ENCODE measurements at regions of chr4 and their contacts with region 1.

Region 1: GRCh38 chr4:75724066-75724866 is at the start of gene USO1:
- DNase-seq: peak; percentile 100
- H3K4me3 ChIP-seq: peak within 1 kb of the TSS; percentile 81 to 94 (median 86)
- H3K27ac ChIP-seq: peak within 1 kb of the TSS; percentile 89
- H3K4me1 ChIP-seq: peaks cover 28% of the 10 kb centered on the region
- H3K27me3 ChIP-seq: no peaks in the 10 kb centered on the region
- CTCF ChIP-seq: peak; percentile 73 to 82
- POLR2A ChIP-seq: peak; percentile 97
- total RNA-seq, gene USO1: 60.2 and 66.0 TPM in 2 replicates

Region 2: DNA sequence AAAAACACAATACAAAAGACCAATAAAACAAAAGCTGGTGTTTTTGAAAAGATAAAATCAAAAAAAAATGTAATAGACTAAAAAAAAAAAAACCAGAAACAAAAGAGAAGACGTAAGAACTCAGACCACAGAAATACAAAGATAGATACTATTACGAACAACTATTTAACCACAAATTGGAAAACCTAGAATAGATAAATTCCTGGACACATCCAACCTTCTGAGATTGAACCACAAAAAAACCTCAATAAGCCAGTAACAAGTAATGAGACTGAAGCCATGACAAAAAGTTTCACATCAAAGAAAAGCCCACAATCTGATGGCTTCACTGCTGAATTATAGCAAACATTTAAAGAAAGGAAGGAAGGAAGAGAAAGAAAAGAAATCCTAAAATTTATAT is 226.2 kb before region 1 on chr4:
- CTCF ChIA-PET with region 1: no interaction called
- POLR2A ChIA-PET with region 1: no interaction called
- dilution Hi-C with region 1: no loop called
- intact Hi-C with region 1: no loop called
- DNase-seq: no peak
- H3K4me3 ChIP-seq: no peak overlapping the region
- H3K27ac ChIP-seq: no peak overlapping the region
- H3K4me1 ChIP-seq: no peaks in the 10 kb centered on the region
- H3K27me3 ChIP-seq: no peaks in the 10 kb centered on the region
- CTCF ChIP-seq: no peak
- POLR2A ChIP-seq: no peak

Region 3: GRCh38 chr4:75514131-75514948 is 209.9 kb before region 1 on chr4 and contains the starts of genes RCHY1 and THAP6:
- CTCF ChIA-PET with region 1: interaction called, 3 read pairs
- POLR2A ChIA-PET with region 1: no interaction called
- dilution Hi-C with region 1: no loop called
- intact Hi-C with region 1: loop called (anchors 2 kb)
- DNase-seq: peak; percentile 92
- H3K4me3 ChIP-seq: peak within 1 kb of the TSS; percentile 71 to 94 (median 81)
- H3K27ac ChIP-seq: peak within 1 kb of the TSS; percentile 72
- H3K4me1 ChIP-seq: peaks cover 35% of the 10 kb centered on the region
- H3K27me3 ChIP-seq: no peaks in the 10 kb centered on the region
- CTCF ChIP-seq: no peak
- POLR2A ChIP-seq: peak; percentile 93
- total RNA-seq, gene RCHY1: 29.1 and 30.9 TPM in 2 replicates
- total RNA-seq, gene THAP6: 6.8 and 8.0 TPM in 2 replicates

Region 4: GRCh38 chr4:75653845-75654503 is 70.3 kb before region 1 on chr4:
- CTCF ChIA-PET with region 1: interaction called, 30 read pairs
- POLR2A ChIA-PET with region 1: no interaction called
- dilution Hi-C with region 1: no loop called
- intact Hi-C with region 1: loop called (anchors 1 kb)
- DNase-seq: peak; percentile 61
- H3K4me3 ChIP-seq: no peak overlapping the region
- H3K27ac ChIP-seq: no peak overlapping the region
- H3K4me1 ChIP-seq: peaks cover 4% of the 10 kb centered on the region
- H3K27me3 ChIP-seq: no peaks in the 10 kb centered on the region
- CTCF ChIP-seq: peak; percentile 38 to 49
- POLR2A ChIP-seq: no peak

Region 5: GRCh38 chr4:75673027-75673958 is 51.0 kb before region 1 on chr4 and contains the start of gene G3BP2:
- CTCF ChIA-PET with region 1: interaction called, 65 read pairs
- POLR2A ChIA-PET with region 1: interaction called, 9 read pairs
- dilution Hi-C with region 1: no loop called
- intact Hi-C with region 1: loop called (anchors 1 kb)
- DNase-seq: peak; percentile 99
- H3K4me3 ChIP-seq: peak within 1 kb of the TSS; percentile 74 to 94 (median 84)
- H3K27ac ChIP-seq: peak within 1 kb of the TSS; percentile 83
- H3K4me1 ChIP-seq: peaks cover 25% of the 10 kb centered on the region
- H3K27me3 ChIP-seq: no peaks in the 10 kb centered on the region
- CTCF ChIP-seq: no peak
- POLR2A ChIP-seq: peak; percentile 67
- total RNA-seq, gene G3BP2: 180 and 194 TPM in 2 replicates

Region 6: DNA sequence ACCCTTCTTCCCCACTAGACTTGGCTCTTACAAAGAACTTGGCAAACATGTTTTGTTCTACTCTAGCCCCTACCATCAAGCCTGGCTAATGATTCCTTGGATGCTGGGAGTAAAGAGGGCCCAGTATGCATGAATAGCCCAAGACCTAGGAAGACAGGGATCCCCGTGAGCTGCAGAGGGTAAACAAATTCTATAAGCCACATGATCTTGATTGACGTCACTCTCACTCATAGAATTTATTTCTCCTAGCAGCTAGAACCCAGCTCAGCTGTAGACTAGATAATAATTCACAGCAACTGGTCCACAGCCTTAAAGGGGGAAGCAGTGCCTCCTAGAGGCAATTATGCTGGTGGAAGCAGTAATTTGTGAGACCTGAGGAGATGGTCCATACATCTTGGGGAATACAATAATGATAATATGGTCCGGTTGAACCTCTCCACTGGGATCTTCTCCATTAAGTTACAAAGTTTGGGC is 16.0 kb before region 1 on chr4:
- CTCF ChIA-PET with region 1: interaction called, 78 read pairs
- POLR2A ChIA-PET with region 1: interaction called, 10 read pairs
- dilution Hi-C with region 1: no loop called
- intact Hi-C with region 1: no loop called
- DNase-seq: no peak
- H3K4me3 ChIP-seq: no peak overlapping the region
- H3K27ac ChIP-seq: no peak overlapping the region
- H3K4me1 ChIP-seq: peaks cover 13% of the 10 kb centered on the region
- H3K27me3 ChIP-seq: no peaks in the 10 kb centered on the region
- CTCF ChIP-seq: peak in 1 of 2 donors; percentile 6
- POLR2A ChIP-seq: no peak

Region 7: DNA sequence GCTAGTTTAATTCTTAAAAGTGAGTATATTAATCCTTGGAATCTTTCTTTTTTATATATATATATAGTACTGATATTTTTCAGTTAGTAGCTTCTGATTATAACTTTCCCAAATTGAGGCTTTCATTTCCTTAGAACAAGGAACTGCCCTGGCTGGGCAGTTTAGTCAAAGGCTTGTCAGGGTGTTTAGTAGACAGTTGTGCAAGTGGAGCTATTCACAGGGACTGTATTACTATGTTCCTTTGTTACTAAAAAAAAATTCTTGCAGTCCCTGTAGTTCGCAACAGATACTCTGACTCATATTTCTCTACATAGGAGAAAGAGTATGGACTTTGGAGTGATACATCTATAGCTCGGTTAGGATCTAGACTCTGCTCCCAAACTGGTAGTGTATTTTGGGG is 20.9 kb after region 1 on chr4:
- CTCF ChIA-PET with region 1: interaction called, 55 read pairs
- POLR2A ChIA-PET with region 1: interaction called, 54 read pairs
- dilution Hi-C with region 1: no loop called
- intact Hi-C with region 1: loop called (anchors 1 kb)
- DNase-seq: peak; percentile 74
- H3K4me3 ChIP-seq: no peak overlapping the region
- H3K27ac ChIP-seq: peak overlapping the region; percentile 75
- H3K4me1 ChIP-seq: peaks cover 25% of the 10 kb centered on the region
- H3K27me3 ChIP-seq: no peaks in the 10 kb centered on the region
- CTCF ChIP-seq: no peak
- POLR2A ChIP-seq: no peak

Region 8: DNA sequence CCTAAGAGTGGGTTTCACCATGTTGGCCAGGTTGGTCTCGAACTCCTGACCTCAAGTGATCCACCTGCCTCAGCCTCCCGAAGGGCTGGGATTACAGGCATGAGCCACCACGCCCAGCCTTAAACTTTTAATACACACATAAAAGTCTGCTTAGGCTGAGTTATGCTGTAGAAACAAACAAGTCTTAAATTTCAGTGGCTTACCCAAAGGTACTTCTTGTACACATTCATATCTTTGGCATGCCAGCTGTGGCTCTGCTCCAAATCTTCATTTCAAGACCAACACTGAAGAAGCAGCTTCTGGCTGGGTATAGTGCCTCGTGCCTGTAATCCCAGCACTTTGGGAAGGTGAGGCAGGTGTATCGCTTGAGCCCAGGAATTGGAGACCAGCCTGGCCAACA is 97.7 kb after region 1 on chr4:
- CTCF ChIA-PET with region 1: no interaction called
- POLR2A ChIA-PET with region 1: no interaction called
- dilution Hi-C with region 1: no loop called
- intact Hi-C with region 1: no loop called
- DNase-seq: no peak
- H3K4me3 ChIP-seq: no peak overlapping the region
- H3K27ac ChIP-seq: no peak overlapping the region
- H3K4me1 ChIP-seq: no peaks in the 10 kb centered on the region
- H3K27me3 ChIP-seq: no peaks in the 10 kb centered on the region
- CTCF ChIP-seq: no peak
- POLR2A ChIP-seq: no peak

Region 9: GRCh38 chr4:75844151-75844662 is 119.9 kb after region 1 on chr4:
- CTCF ChIA-PET with region 1: interaction called, 15 read pairs
- POLR2A ChIA-PET with region 1: interaction called, 3 read pairs
- dilution Hi-C with region 1: no loop called
- intact Hi-C with region 1: loop called (anchors 1 kb)
- DNase-seq: peak; percentile 14
- H3K4me3 ChIP-seq: no peak overlapping the region
- H3K27ac ChIP-seq: no peak overlapping the region
- H3K4me1 ChIP-seq: peaks cover 12% of the 10 kb centered on the region
- H3K27me3 ChIP-seq: no peaks in the 10 kb centered on the region
- CTCF ChIP-seq: no peak
- POLR2A ChIP-seq: no peak

Measured in endothelial cell of umbilical vein (primary cell).